ENCODE measurements at regions of chr6 and their contacts with region 1.

Region 1: DNA sequence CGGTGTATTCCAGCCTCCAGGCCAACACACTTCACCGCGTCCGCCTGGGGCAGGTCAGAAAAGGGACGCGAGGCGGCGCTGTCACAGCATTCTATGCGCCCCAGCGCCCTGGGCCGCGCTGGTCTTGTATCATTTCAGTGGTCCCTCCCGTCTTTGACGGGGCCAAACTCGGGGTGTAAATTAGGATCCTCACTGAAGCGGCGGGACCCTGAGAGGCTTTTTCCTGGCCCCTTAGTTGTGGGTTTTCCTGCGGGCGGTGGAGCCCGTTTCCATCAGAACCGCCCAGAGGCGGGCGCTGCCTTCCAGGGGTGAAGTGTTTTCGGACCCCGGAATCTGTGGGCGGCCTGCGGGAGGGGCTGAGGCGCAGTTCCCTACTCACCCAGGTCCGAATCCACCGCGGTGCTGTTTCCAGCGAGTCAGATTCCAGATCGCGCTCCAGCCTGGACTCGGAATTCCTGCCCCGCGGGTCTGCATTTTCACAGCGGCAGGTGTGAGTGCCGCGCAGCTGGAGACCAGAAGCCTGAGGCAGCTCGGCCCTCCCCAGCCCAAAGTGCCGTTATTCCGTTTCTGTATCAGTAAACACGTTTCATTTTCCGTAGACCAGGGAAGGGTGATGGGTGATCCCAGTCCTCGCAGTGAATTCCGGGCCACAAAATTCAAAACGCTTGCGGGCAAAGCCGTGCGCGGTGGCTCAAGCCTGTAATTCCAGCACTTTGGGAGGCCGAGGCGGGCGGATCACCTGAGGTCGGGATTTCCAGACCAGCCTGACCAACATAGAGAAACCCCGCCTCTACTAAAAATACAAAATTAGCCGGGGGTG is 3.9 kb upstream of the MICB start:
- DNase-seq: peak; percentile 70
- ATAC-seq: peak; percentile 84
- H3K4me3 ChIP-seq: peak overlapping the region; percentile 57 to 80 (median 62)
- H3K27ac ChIP-seq: no peak overlapping the region
- H3K4me1 ChIP-seq: peaks cover 49% of the 10 kb centered on the region
- H3K27me3 ChIP-seq: peaks cover 0 to 20% of the 10 kb centered on the region in 2 experiments; a peak in 2 of 5 replicates
- CTCF ChIP-seq: peak; percentile 97
- EP300 ChIP-seq: no peak
- POLR2A ChIP-seq: no peak
- RAD21 ChIP-seq: peak; percentile 91

Region 2: DNA sequence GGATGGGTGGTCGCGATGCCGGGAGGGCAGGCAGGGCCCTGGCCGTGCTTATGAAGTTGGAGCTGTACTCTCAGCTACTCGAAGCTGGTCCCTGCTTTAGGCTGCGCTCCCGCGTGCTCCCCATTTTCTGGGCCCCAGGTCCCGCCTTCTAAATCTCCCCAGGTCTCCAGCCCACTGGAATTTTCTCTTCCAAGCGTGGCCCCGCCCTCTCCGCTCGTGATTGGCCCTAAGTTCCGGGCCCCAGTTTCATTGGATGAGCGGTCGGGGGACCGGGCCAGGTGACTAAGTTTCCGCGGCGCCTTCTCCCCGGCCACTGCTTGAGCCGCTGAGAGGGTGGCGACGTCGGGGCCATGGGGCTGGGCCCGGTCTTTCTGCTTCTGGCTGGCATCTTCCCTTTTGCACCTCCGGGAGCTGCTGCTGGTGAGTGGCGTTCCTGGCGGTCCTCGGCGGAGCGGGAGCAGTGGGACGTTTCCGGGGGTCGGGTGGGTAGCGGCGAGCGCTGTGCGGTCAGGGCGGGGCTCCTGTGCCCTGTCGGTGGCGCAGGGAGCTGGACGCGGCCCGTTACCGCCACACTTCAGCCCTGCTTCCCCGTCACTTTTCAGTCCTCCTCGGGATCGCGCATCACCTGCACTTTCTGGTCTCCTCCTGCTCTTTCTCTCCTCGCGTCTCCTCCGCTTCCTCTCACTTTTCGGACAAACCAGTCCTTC is 90.6 kb before region 1 on chr6 and contains the start of gene MICA:
- CTCF ChIA-PET with region 1: no interaction called
- POLR2A ChIA-PET with region 1: no interaction called
- in situ Hi-C with region 1: no loop called
- intact Hi-C with region 1: no loop called
- DNase-seq: peak; percentile 91
- ATAC-seq: peak; percentile 84
- H3K4me3 ChIP-seq: peak within 1 kb of the TSS; percentile 88 to 96 (median 96)
- H3K27ac ChIP-seq: peak within 1 kb of the TSS; percentile 87
- H3K4me1 ChIP-seq: peaks cover 67% of the 10 kb centered on the region
- H3K27me3 ChIP-seq: no peaks in the 10 kb centered on the region; a peak in 1 of 5 replicates
- CTCF ChIP-seq: peak; percentile 36; the same call in 1 of the 2 replicates
- EP300 ChIP-seq: no peak
- POLR2A ChIP-seq: peak; percentile 70 to 94
- RAD21 ChIP-seq: no peak
- total RNA-seq, gene MICA: 20.5 and 38.1 TPM in 2 replicates

Region 3: GRCh38 chr6:31525932-31526591 is 32.0 kb after region 1 on chr6:
- CTCF ChIA-PET with region 1: no interaction called
- POLR2A ChIA-PET with region 1: interaction called, 13 read pairs
- in situ Hi-C with region 1: loop called (anchors 5 kb)
- intact Hi-C with region 1: loop called (anchors 2 kb)
- DNase-seq: no peak
- ATAC-seq: peak; percentile 16
- H3K4me3 ChIP-seq: 0 out of 6 replicates have a peak overlapping the region, but pooled peaks of 1 of the 3 experiments have one; percentile 8
- H3K27ac ChIP-seq: no peak overlapping the region
- H3K4me1 ChIP-seq: peaks cover 52% of the 10 kb centered on the region
- H3K27me3 ChIP-seq: no peaks in the 10 kb centered on the region
- CTCF ChIP-seq: no peak
- EP300 ChIP-seq: no peak
- POLR2A ChIP-seq: no peak
- RAD21 ChIP-seq: no peak

Region 4: DNA sequence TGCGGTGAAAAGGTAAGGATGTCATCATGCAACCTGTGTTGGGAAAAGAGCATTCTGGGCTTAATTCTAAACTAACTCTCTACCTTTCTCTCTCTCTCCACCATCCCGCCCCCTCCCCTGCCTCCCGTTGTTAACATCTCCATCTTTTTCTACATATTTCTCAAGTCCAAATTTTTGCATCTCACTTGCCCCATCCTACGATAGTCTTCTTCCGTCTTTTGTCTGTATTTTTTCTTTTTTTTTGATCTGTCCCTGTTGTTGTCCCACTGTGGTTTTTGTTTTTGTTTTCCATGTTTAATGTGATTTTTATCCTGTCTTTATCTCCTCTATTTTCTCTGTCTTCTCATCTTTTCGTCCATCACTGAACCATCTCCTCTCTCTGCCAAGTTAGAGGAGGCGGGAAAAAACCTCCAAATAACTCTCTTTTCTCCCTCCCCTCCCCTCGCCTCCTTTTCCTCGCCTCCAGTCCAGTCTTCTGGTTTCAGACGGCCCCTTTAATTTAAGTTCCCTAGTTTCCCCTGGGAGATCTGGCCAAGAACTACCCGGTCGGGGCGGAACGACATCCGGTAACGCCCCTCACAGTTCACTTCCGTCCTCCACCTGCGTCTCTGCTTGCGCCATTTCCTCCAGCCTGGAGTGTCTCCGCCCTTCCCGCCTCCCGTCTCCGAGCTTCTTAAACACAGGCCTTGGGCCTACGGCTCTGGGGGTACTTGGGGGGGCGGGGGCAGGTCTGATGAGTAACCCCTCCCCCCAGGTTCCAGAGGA is 53.1 kb after region 1 on chr6 and contains the start of gene NFKBIL1:
- CTCF ChIA-PET with region 1: interaction called, 10 read pairs
- POLR2A ChIA-PET with region 1: interaction called, 20 read pairs
- in situ Hi-C with region 1: no loop called
- intact Hi-C with region 1: loop called (anchors 2 kb)
- DNase-seq: peak; percentile 93
- ATAC-seq: peak; percentile 93
- H3K4me3 ChIP-seq: peak within 1 kb of the TSS; percentile 74 to 93 (median 76)
- H3K27ac ChIP-seq: peak within 1 kb of the TSS; percentile 64
- H3K4me1 ChIP-seq: peaks cover 43% of the 10 kb centered on the region
- H3K27me3 ChIP-seq: no peaks in the 10 kb centered on the region; a peak in 1 of 5 replicates
- CTCF ChIP-seq: peak; percentile 36; the same call in 1 of the 2 replicates
- EP300 ChIP-seq: peak in 1 of 2 experiments; percentile 37; a peak in 1 of 4 replicates
- POLR2A ChIP-seq: peak; percentile 37 to 63; a peak in 3 of 4 replicates
- RAD21 ChIP-seq: peak; percentile 12; the same call in 1 of the 2 replicates
- total RNA-seq, gene NFKBIL1: 13.9 and 19.5 TPM in 2 replicates

Region 5: GRCh38 chr6:31597006-31597405 is 102.9 kb after region 1 on chr6:
- CTCF ChIA-PET with region 1: interaction called, 15 read pairs
- POLR2A ChIA-PET with region 1: interaction called, 4 read pairs
- in situ Hi-C with region 1: no loop called
- intact Hi-C with region 1: loop called (anchors 1 kb)
- DNase-seq: peak; percentile 61
- ATAC-seq: peak; percentile 68
- H3K4me3 ChIP-seq: no peak overlapping the region
- H3K27ac ChIP-seq: no peak overlapping the region
- H3K4me1 ChIP-seq: peaks cover 19% of the 10 kb centered on the region
- H3K27me3 ChIP-seq: peaks cover 0 to 3% of the 10 kb centered on the region in 2 experiments; a peak in 1 of 5 replicates
- CTCF ChIP-seq: peak; percentile 68
- EP300 ChIP-seq: no peak
- POLR2A ChIP-seq: no peak
- RAD21 ChIP-seq: peak; percentile 45; the same call in 1 of the 2 replicates

Measured in HepG2 (cell line).